ENCODE measurements at regions of chr19 and their contacts with region 1.

Region 1: DNA sequence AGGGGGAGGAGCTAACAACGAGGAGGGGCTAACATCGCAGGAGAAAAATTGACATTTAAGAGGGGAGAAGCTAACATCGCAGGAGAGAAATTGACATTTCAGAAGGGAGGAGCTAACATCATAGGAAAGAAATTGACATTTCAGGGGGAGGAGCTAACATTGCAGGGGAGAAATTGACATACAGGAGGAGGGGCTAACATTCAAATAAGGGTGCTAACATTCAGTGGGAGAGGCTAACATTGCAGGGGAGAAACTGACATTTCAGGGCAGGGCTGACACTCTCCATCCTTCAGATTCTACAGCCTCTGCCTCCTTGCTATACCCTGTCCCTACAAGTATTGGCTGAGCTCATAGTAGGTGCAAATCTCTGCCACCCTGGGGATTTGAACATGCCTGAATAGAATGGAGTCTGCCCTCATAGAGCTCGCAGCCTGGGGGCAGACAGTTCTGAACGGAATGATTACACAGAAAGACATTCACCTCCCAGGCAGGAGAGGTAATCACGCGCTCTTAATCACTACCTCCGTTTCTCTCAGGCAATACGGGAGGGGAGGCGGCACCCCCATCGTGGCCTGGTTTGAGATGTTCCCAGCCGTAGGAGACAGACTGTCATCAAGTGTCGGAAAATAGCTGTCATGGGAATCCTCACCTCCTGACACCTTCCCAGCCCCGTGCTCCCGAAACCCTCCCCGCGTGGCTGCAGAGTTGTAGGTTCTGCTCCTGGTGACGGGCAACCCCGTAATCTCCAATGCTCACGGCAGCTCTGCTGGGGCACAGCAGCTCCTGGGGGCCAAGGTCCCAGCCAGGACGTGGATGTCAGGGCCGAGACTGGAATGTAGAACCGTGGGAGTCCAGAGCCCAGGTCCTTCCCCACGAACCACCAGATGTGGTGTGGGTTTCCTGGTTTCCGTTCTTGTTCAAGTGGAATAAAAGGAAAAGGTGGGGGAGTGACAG is 9.5 kb downstream of the GPR32 start:
- DNase-seq: no peak
- H3K4me3 ChIP-seq: no peak overlapping the region
- H3K27ac ChIP-seq: no peak overlapping the region
- H3K4me1 ChIP-seq: no peaks in the 10 kb centered on the region
- H3K27me3 ChIP-seq: peaks cover 55% of the 10 kb centered on the region

Region 2: GRCh38 chr19:50333737-50334617 is 445.8 kb before region 1 on chr19:
- in situ Hi-C with region 1: no loop called
- DNase-seq: peak; percentile 78
- H3K4me3 ChIP-seq: peak overlapping the region; percentile 69
- H3K27ac ChIP-seq: no peak overlapping the region
- H3K4me1 ChIP-seq: no peaks in the 10 kb centered on the region
- H3K27me3 ChIP-seq: peaks cover 33% of the 10 kb centered on the region

Region 3: GRCh38 chr19:50547385-50548190 is 232.2 kb before region 1 on chr19:
- in situ Hi-C with region 1: loop called (anchors 10 kb)
- DNase-seq: no peak
- H3K4me3 ChIP-seq: no peak overlapping the region
- H3K27ac ChIP-seq: no peak overlapping the region
- H3K4me1 ChIP-seq: no peaks in the 10 kb centered on the region
- H3K27me3 ChIP-seq: 0 out of 2 replicates have a peak, but pooled peaks cover 6% of the 10 kb centered on the region

Region 4: GRCh38 chr19:51219307-51219706 is 439.5 kb after region 1 on chr19:
- in situ Hi-C with region 1: no loop called
- DNase-seq: no peak
- H3K4me3 ChIP-seq: no peak overlapping the region
- H3K27ac ChIP-seq: no peak overlapping the region
- H3K4me1 ChIP-seq: no peaks in the 10 kb centered on the region
- H3K27me3 ChIP-seq: no peaks in the 10 kb centered on the region